ENCODE measurements at regions of chr7 and their contacts with region 1.

Region 1: GRCh38 chr7:43582503-43583423 is at the start of gene STK17A:
- DNase-seq: peak; percentile 94 to 97 (median 96)
- ATAC-seq: peak; percentile 89
- H3K4me3 ChIP-seq: peak within 1 kb of the TSS; percentile 89
- H3K27ac ChIP-seq: peak within 1 kb of the TSS; percentile 82
- H3K4me1 ChIP-seq: peaks cover 7 to 18% of the 10 kb centered on the region in 2 experiments; a peak in 4 of 5 replicates
- H3K27me3 ChIP-seq: no peaks in the 10 kb centered on the region; a peak in 1 of 5 replicates
- CTCF ChIP-seq: peak; percentile 97 to 100 (median 100)
- EP300 ChIP-seq: no peak
- POLR2A ChIP-seq: peak; percentile 86
- RAD21 ChIP-seq: peak; percentile 91 to 94
- polyA plus RNA-seq, gene STK17A: 3.4 to 3.5 TPM

Region 2: GRCh38 chr7:43572516-43573049 is 10.2 kb before region 1 on chr7:
- CTCF ChIA-PET with region 1: interaction called, 9 read pairs
- POLR2A ChIA-PET with region 1: interaction called, 16 read pairs
- in situ Hi-C with region 1: no loop called
- intact Hi-C with region 1: no loop called
- DNase-seq: peak; percentile 33 to 82 (median 50)
- ATAC-seq: peak; percentile 89
- H3K4me3 ChIP-seq: no peak overlapping the region
- H3K27ac ChIP-seq: peak overlapping the region; percentile 82
- H3K4me1 ChIP-seq: peaks cover 4 to 18% of the 10 kb centered on the region in 2 experiments
- H3K27me3 ChIP-seq: no peaks in the 10 kb centered on the region
- CTCF ChIP-seq: no peak
- EP300 ChIP-seq: peak; percentile 64; the same call in 1 of the 2 replicates
- POLR2A ChIP-seq: peak; percentile 17; the same call in 1 of the 2 replicates
- RAD21 ChIP-seq: no peak

Region 3: GRCh38 chr7:43700059-43700501 is 117.3 kb after region 1 on chr7:
- CTCF ChIA-PET with region 1: interaction called, 22 read pairs
- POLR2A ChIA-PET with region 1: interaction called, 7 read pairs
- in situ Hi-C with region 1: no loop called
- intact Hi-C with region 1: loop called (anchors 1 kb)
- DNase-seq: peak in 2 of 4 experiments; percentile 28 to 37
- ATAC-seq: peak; percentile 79
- H3K4me3 ChIP-seq: no peak overlapping the region
- H3K27ac ChIP-seq: no peak overlapping the region
- H3K4me1 ChIP-seq: no peaks in the 10 kb centered on the region
- H3K27me3 ChIP-seq: no peaks in the 10 kb centered on the region
- CTCF ChIP-seq: peak; percentile 46 to 79 (median 50); a peak in 4 of 6 replicates
- EP300 ChIP-seq: no peak
- POLR2A ChIP-seq: no peak
- RAD21 ChIP-seq: peak; percentile 77 to 84

Region 4: GRCh38 chr7:43729214-43729923 is 146.6 kb after region 1 on chr7 and contains the start of gene COA1:
- CTCF ChIA-PET with region 1: no interaction called
- POLR2A ChIA-PET with region 1: interaction called, 4 read pairs
- in situ Hi-C with region 1: no loop called
- intact Hi-C with region 1: loop called (anchors 5 kb)
- DNase-seq: peak; percentile 76 to 96 (median 84)
- ATAC-seq: peak; percentile 85
- H3K4me3 ChIP-seq: peak within 1 kb of the TSS; percentile 61
- H3K27ac ChIP-seq: peak within 1 kb of the TSS; percentile 80
- H3K4me1 ChIP-seq: peaks cover 9 to 11% of the 10 kb centered on the region in 2 experiments
- H3K27me3 ChIP-seq: no peaks in the 10 kb centered on the region
- CTCF ChIP-seq: no peak
- EP300 ChIP-seq: peak; percentile 56; the same call in 1 of the 2 replicates
- POLR2A ChIP-seq: peak; percentile 95
- RAD21 ChIP-seq: 0 out of 4 replicates have a peak, but pooled peaks of 1 of the 2 experiments have one; percentile 13
- polyA plus RNA-seq, gene COA1: 432 to 463 TPM

Region 5: GRCh38 chr7:43808135-43808809 is 225.5 kb after region 1 on chr7:
- CTCF ChIA-PET with region 1: interaction called, 15 read pairs
- POLR2A ChIA-PET with region 1: interaction called, 3 read pairs
- in situ Hi-C with region 1: no loop called
- intact Hi-C with region 1: loop called (anchors 1 kb)
- DNase-seq: no peak
- ATAC-seq: no peak
- H3K4me3 ChIP-seq: no peak overlapping the region
- H3K27ac ChIP-seq: no peak overlapping the region
- H3K4me1 ChIP-seq: peaks cover 0 to 3% of the 10 kb centered on the region in 2 experiments; a peak in 2 of 5 replicates
- H3K27me3 ChIP-seq: no peaks in the 10 kb centered on the region
- CTCF ChIP-seq: no peak
- EP300 ChIP-seq: no peak
- POLR2A ChIP-seq: no peak
- RAD21 ChIP-seq: no peak

Region 6: GRCh38 chr7:43954524-43955228 is 371.9 kb after region 1 on chr7:
- CTCF ChIA-PET with region 1: no interaction called
- POLR2A ChIA-PET with region 1: no interaction called
- in situ Hi-C with region 1: no loop called
- intact Hi-C with region 1: loop called (anchors 10 kb)
- DNase-seq: peak; percentile 51 to 70 (median 60)
- ATAC-seq: peak; percentile 99
- H3K4me3 ChIP-seq: no peak overlapping the region
- H3K27ac ChIP-seq: no peak overlapping the region
- H3K4me1 ChIP-seq: no peaks in the 10 kb centered on the region
- H3K27me3 ChIP-seq: no peaks in the 10 kb centered on the region
- CTCF ChIP-seq: peak; percentile 71 to 79 (median 74)
- EP300 ChIP-seq: no peak
- POLR2A ChIP-seq: no peak
- RAD21 ChIP-seq: peak; percentile 33 to 74; a peak in 2 of 4 replicates

Measured in K562 (cell line).